HepG2 (cell line): ENCODE measurements at regions of chr22 and their contacts with region 1.

Region 1: DNA sequence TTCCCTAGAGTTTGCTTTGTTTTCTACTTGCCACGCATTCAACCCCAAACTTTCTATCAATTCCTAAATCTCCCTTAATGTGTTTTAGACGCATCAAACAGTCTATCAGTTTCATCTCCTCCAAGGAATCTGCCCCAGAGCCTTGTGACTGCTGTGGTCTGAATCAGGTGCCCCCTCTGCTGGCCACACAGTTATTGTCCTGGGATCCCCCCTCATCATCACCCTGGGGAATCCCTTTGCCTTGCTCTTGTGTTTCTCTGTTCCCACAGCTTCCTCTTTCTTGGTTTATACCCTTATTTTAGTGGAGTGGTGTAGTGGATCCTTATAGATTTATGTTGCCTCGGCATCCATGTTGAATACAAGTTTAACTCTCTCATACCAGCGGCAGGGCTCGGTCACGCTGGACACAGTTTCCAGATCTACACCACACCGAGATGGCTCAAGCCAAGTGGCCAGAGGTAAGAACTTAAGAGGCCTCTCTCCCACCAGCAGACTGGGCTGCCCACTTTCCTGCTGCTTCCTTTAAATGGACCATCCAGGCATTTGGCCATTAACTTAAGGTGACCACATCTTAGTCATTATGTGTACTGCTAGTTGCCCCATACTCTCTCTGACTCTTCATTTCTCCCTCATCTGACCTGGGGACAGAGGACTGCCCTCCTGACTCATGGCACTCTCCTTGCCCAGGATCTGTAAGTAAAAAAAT is 8.2 kb downstream of the UPB1 start:
- DNase-seq: no peak
- ATAC-seq: no peak
- H3K4me3 ChIP-seq: no peak overlapping the region
- H3K27ac ChIP-seq: peak overlapping the region; percentile 99
- H3K4me1 ChIP-seq: peaks cover 100% of the 10 kb centered on the region
- H3K27me3 ChIP-seq: no peaks in the 10 kb centered on the region
- CTCF ChIP-seq: peak; percentile 79
- EP300 ChIP-seq: no peak
- POLR2A ChIP-seq: no peak
- RAD21 ChIP-seq: peak; percentile 61

Region 2: GRCh38 chr22:24270638-24271408 is 232.5 kb before region 1 on chr22 and contains the start of gene SPECC1L:
- CTCF ChIA-PET with region 1: no interaction called
- POLR2A ChIA-PET with region 1: no interaction called
- in situ Hi-C with region 1: no loop called
- intact Hi-C with region 1: loop called (anchors 10 kb)
- DNase-seq: peak; percentile 79
- ATAC-seq: peak; percentile 96
- H3K4me3 ChIP-seq: peak within 1 kb of the TSS; percentile 89 to 94 (median 89)
- H3K27ac ChIP-seq: peak within 1 kb of the TSS; percentile 89
- H3K4me1 ChIP-seq: peaks cover 66% of the 10 kb centered on the region
- H3K27me3 ChIP-seq: no peaks in the 10 kb centered on the region; a peak in 1 of 5 replicates
- CTCF ChIP-seq: peak; percentile 38; the same call in 1 of the 2 replicates
- EP300 ChIP-seq: no peak
- POLR2A ChIP-seq: peak; percentile 95 to 97
- RAD21 ChIP-seq: peak; percentile 67
- total RNA-seq, gene SPECC1L: 30.3 and 40.2 TPM in 2 replicates

Region 3: GRCh38 chr22:24482575-24482974 is 20.7 kb before region 1 on chr22:
- CTCF ChIA-PET with region 1: no interaction called
- POLR2A ChIA-PET with region 1: interaction called, 17 read pairs
- in situ Hi-C with region 1: no loop called
- intact Hi-C with region 1: no loop called
- DNase-seq: no peak
- ATAC-seq: peak; percentile 45; the same call in 2 of the 3 replicates
- H3K4me3 ChIP-seq: no peak overlapping the region
- H3K27ac ChIP-seq: no peak overlapping the region
- H3K4me1 ChIP-seq: peaks cover 66% of the 10 kb centered on the region
- H3K27me3 ChIP-seq: no peaks in the 10 kb centered on the region
- CTCF ChIP-seq: no peak
- EP300 ChIP-seq: no peak
- POLR2A ChIP-seq: no peak
- RAD21 ChIP-seq: no peak

Region 4: GRCh38 chr22:24525416-24526037 is 22.2 kb after region 1 on chr22:
- CTCF ChIA-PET with region 1: no interaction called
- POLR2A ChIA-PET with region 1: interaction called, 46 read pairs
- in situ Hi-C with region 1: no loop called
- intact Hi-C with region 1: loop called (anchors 2 kb)
- DNase-seq: peak; percentile 92
- ATAC-seq: peak; percentile 88
- H3K4me3 ChIP-seq: no peak overlapping the region
- H3K27ac ChIP-seq: no peak overlapping the region
- H3K4me1 ChIP-seq: peaks cover 54% of the 10 kb centered on the region
- H3K27me3 ChIP-seq: no peaks in the 10 kb centered on the region
- CTCF ChIP-seq: peak; percentile 99
- EP300 ChIP-seq: peak in 1 of 2 experiments; percentile 64; a peak in 1 of 4 replicates
- POLR2A ChIP-seq: no peak
- RAD21 ChIP-seq: peak; percentile 96

Region 5: GRCh38 chr22:24555157-24556039 is 52.1 kb after region 1 on chr22 and contains the start of gene SNRPD3:
- CTCF ChIA-PET with region 1: no interaction called
- POLR2A ChIA-PET with region 1: interaction called, 32 read pairs
- in situ Hi-C with region 1: no loop called
- intact Hi-C with region 1: no loop called
- DNase-seq: peak; percentile 96
- ATAC-seq: peak; percentile 82
- H3K4me3 ChIP-seq: peak within 1 kb of the TSS; percentile 89 to 97 (median 91)
- H3K27ac ChIP-seq: peak within 1 kb of the TSS; percentile 93
- H3K4me1 ChIP-seq: peaks cover 71% of the 10 kb centered on the region
- H3K27me3 ChIP-seq: no peaks in the 10 kb centered on the region; a peak in 1 of 5 replicates
- CTCF ChIP-seq: peak; percentile 29
- EP300 ChIP-seq: peak in 1 of 2 experiments; percentile 34; a peak in 1 of 4 replicates
- POLR2A ChIP-seq: peak in 1 of 2 experiments; percentile 76
- RAD21 ChIP-seq: 0 out of 2 replicates have a peak, but pooled peaks have one; percentile 35
- total RNA-seq, gene SNRPD3: 209 and 287 TPM in 2 replicates